GM10248 (cell line): ENCODE measurements at regions of chr17 and their contacts with region 1.

Region 1: DNA sequence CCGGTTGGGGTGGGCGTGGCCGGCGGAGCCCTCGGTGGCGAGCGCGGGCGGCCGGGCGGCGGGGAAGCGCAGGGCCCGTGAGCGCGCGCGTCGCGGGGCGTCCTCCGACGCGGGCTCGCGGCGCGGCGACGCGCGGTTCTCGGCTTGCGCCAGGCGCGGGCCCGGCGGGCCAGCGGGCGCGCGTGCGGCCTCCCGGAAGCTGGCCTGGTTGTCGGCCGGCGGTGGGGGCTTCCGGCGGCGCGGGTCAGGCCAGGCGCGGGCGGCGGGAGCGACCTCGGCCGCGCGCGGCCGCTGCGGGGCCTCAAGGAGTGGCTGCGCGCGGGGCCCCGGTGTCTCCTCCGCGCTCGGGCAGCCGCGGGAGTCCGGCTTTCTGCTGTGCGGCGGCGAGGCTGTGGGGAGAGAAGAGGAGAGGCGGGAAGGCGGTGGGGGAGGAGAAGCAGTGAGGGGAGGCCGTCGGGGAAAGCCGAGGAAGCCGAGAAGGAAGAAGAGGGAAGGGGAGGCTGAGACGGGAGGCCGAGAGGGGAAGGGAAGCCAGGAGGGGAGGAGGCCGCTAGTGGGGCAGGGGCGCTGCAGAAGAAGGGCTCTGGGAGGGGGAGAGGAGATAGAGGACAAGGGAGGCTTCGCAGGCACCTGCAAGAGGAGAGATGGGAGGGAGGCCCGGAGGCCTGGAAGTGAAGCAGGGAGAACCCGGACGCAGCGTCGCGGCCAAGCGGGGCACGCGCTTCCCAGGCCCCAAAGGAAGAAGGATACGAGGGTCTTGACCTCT is 2.5 kb downstream of the C17orf58 start:
- DNase-seq: peak; percentile 89
- CTCF ChIP-seq: no peak

Region 2: DNA sequence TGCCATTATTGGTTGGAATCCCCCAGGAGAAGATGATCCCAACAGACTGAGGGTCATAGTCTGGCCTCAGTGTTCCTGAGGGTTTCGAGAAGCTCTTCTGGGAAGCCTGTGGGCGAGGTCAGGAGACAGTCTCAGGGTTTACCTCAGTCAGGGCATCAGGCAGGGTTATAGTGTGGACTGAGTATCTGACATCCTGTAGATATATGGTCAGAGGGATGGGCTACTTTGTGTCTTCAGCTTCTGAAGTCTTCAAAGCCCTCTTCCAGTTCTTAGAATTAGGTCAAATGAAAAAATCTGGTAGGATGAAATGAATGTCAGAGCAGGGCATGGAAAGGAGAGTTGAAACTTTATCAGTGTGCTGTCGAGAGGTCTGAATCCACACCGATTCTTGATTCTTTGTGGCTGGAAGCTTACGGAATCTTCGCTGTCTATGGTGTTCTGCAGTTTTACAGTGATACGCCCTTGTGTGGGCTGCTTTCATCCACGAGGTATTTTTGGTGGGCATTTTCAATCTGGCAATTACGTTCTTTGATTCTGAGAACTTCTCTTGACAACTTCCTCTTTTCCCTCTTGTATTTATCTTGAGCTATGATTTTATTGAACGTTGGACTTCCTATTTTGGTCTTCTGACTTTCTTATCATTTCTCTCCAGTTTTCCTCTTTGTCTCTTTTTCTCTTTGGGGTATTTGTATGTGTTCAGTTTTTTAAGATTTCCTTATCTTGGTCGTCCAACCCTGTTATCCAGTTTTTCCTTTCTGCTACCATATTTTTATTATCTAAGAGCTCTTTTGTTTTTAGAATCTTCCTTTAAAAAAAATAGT is 138.1 kb before region 1 on chr17:
- CTCF ChIA-PET with region 1: no interaction called
- POLR2A ChIA-PET with region 1: no interaction called
- DNase-seq: no peak
- CTCF ChIP-seq: no peak

Region 3: DNA sequence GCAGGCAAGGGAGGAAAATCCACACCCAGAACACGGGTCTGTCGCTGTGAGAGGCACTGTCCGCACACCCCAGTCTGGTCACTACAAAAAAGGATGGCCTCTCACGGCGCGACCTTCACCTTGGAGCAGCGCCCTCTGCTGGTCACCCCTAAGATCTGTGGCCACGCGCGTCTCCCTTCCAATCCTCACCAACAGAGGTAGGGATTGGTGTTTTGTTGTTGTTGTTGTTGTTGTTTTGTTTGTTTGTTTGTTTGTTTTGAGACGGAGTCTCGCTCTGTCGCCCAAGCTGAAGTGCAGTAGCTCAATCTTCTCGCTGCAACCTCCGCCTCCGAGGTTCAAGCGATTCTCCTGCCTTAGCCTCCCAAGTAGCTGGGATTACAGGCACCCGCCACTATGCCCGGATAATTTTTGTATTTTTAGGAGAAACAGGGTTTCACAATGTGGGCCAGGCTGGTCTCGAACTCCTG is 17.5 kb after region 1 on chr17:
- CTCF ChIA-PET with region 1: interaction called, 25 read pairs
- POLR2A ChIA-PET with region 1: no interaction called
- DNase-seq: peak; percentile 75
- CTCF ChIP-seq: peak; percentile 70